ENCODE measurements at regions of chr6 and their contacts with region 1.

Region 1: DNA sequence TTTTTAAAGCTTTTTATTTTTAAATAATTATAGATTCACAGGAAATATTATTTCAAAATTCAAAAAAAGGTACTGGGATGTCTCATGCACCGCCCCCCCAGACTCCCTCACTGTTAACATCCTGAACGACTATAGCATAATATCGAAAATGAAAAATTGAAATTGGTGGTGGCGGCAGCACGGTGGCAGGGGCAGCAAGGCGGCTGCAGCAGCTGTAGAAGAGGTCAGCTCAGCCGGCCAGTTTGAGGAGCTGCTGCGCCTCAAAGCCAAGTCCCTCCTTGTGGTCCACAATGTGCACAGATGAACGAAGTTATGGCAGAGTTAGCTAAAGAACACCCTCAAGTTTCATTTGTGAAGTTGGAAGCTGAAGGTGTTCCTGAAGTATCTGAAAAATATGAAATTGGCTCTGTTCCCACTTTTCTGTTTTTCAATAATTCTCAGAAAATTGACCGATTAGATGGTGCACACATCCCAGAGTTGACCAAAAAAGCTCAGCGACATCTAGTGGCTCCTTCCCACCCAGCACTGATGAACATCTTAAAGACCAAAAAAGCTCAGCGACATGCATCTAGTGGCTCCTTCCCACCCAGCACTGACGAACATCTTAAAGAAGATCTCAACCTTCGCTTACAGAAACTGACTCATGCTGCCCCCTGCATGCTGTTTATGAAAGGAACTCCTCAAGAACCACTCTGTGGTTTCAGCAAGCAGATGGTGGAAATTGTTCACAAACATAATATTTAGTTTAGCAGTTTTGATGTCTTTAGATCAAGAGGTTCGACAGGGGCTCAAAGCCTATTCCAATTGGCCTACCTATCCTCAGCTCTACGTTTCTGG is 100.8 kb downstream of the FAM217A start:
- DNase-seq: peak; percentile 58
- H3K4me3 ChIP-seq: no peak overlapping the region
- H3K27me3 ChIP-seq: no peaks in the 10 kb centered on the region
- CTCF ChIP-seq: peak; percentile 75

Region 2: DNA sequence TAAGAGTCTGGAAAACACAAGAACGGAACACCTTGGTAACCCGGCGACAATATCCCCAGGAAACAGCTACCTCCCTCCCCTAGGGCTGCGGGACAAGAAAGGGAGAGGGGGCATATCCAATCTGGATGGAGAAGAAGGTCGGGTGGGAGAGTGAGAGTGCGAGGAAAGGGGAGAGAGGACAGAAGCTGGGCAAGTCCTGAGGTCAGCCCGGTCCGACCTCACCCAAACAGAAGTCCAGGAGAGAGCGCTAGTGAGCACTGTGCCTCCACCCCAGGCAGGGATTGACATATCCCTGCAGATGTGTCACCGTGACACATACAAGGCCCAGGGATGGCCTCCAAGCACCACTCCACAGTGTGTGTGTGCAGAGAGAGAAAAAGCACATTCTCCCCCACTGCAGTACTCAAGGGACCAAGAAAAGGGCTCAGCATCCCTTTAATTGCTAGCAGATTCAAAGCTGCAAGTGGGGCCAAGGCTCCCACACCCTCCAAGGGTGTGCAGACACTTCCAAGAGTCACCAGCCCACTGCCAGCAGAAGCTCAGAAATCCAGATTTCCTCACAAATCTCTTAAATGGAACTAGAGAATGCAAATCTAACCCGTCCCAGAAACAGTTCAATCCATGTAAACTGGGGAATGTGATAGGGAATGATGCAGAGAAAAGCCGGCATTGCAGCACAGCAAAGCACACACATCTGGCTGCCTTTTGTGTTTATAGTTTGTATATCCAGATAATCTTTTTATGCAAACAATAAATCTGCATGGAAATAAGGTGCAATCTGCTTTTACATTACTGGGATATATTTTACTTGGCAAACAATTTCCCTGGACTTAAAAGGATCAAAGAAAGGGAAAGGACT is 229.7 kb before region 1 on chr6:
- CTCF ChIA-PET with region 1: interaction called, 48 read pairs
- POLR2A ChIA-PET with region 1: no interaction called
- DNase-seq: peak; percentile 24
- H3K4me3 ChIP-seq: peak overlapping the region; percentile 65
- H3K27me3 ChIP-seq: no peaks in the 10 kb centered on the region
- CTCF ChIP-seq: peak; percentile 82

Region 3: DNA sequence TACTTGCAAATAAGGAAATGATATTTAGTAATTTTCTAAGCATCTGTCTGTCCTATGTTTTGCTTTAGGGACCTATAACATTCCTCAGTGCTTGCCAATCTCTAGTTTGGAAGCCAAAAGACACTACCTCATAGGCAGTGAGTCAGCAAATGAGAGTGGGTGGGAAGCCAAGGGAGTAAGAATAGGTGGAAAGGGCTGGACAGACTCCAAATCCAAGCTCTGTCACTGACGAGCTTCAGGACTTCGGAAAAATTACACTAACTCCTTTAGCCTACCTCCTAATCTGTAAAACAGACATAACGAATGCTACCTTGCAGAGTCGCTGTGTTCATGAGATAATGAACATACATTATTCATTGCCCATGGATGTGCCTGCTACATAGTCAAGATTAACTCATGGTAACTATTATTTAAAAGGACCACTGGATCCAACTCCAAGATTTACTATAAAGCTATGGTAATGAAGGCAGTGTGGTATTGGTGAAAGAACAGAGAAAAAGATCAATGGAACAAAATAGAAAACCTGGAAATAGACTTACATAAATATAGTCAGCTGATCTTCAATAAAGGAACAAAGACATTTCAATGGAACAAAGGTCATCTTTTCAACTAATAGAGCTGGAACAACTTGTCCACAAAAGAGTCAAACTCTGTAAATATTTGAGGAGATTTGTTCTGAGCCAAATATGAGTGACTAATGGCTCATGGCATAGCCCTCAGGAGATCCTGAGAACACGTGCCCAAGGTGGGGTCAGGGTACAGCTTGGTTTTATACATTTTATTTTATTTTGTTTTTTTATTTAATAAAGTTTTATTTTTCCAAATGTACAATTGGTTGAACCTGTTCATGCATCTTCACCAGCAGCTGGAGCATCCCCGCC is 64.8 kb before region 1 on chr6:
- CTCF ChIA-PET with region 1: interaction called, 15 read pairs
- POLR2A ChIA-PET with region 1: no interaction called
- DNase-seq: peak; percentile 98
- H3K4me3 ChIP-seq: no peak overlapping the region
- H3K27me3 ChIP-seq: no peaks in the 10 kb centered on the region
- CTCF ChIP-seq: no peak

Region 4: DNA sequence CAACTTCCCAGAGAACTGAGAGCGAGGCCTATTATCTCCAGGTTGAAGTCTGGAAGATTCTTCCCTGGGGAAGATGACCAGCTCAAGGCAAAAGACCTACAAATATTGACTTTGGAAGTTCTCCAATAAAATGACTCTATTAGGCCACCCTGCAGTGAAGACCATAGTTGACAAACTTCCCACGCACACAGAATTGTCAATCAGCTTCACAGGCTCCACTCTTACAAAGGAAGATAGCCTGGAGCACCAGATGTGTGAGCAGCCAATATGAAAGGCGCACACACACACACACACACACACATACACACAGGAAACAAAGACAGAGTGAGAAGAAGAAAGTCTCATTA is 15.2 kb before region 1 on chr6:
- CTCF ChIA-PET with region 1: interaction called, 21 read pairs
- POLR2A ChIA-PET with region 1: no interaction called
- DNase-seq: no peak
- H3K4me3 ChIP-seq: no peak overlapping the region
- H3K27me3 ChIP-seq: no peaks in the 10 kb centered on the region
- CTCF ChIP-seq: no peak

Region 5: GRCh38 chr6:3997177-3997770 is 19.2 kb after region 1 on chr6:
- CTCF ChIA-PET with region 1: interaction called, 18 read pairs
- POLR2A ChIA-PET with region 1: no interaction called
- DNase-seq: peak; percentile 65
- H3K4me3 ChIP-seq: no peak overlapping the region
- H3K27me3 ChIP-seq: no peaks in the 10 kb centered on the region
- CTCF ChIP-seq: no peak

Region 6: DNA sequence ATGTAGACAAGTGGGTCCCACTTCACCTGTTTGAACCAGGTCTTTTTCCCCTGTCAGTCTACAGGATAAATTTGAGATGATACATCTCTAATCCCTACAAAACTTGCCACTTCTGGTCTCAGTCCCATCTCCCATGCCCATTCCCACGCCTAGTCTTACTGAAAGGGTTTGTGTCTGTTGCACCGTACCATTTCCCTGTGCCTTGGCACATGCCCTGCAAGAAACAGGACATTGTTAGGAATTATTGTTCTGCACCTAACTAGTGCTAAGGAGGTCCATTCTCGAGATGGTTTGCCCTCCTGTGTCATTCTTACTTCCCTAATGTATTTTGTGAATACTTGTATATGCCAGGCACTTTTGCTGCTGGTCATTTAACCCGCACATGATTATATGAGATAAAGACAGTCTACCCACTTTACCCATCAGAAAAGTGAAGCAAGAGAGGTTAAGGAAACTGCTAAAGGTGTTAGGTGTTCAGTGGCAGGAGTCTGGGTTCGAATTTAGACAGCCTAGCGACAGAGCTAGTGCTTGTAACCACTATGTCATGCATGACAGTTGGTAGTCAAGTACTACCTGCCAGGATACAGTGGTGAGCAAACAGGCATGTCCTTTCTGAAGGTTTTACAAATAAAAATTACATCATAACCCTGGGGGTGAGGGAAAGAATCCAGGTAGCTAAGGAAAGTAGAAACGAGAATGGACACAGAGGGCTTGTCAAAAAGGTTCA is 88.1 kb after region 1 on chr6:
- CTCF ChIA-PET with region 1: no interaction called
- POLR2A ChIA-PET with region 1: no interaction called
- DNase-seq: no peak
- H3K4me3 ChIP-seq: no peak overlapping the region
- H3K27me3 ChIP-seq: no peaks in the 10 kb centered on the region
- CTCF ChIP-seq: no peak